ENCODE measurements at regions of chr7 and their contacts with region 1.

Region 1: DNA sequence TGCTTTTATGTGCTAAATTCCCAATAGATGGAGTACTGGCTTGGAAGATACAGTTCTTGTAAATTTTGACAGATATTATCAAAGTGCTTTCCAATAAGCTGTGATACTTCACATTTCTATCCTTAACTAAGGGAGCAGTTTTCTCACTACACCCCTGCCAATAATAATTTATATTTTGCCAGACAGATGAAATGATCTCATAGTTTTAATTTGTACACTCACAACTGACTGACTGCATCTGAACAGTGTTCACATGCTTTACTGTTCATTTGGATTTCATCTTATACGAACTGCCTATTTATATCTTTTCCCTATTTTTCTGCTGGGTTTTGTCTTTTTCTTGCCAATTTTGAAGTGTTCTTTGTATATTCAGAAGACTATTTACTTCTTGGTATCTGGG is 96.0 kb downstream of the BRAF start:
- DNase-seq: no peak
- ATAC-seq: no peak

Region 2: GRCh38 chr7:140902303-140902953 is 73.7 kb after region 1 on chr7:
- intact Hi-C with region 1: no loop called
- DNase-seq: no peak
- ATAC-seq: no peak

Region 3: GRCh38 chr7:140914083-140914482 is 85.3 kb after region 1 on chr7:
- intact Hi-C with region 1: loop called in 1 of 2 experiments (anchors 10 kb)
- DNase-seq: no peak
- ATAC-seq: no peak

Region 4: DNA sequence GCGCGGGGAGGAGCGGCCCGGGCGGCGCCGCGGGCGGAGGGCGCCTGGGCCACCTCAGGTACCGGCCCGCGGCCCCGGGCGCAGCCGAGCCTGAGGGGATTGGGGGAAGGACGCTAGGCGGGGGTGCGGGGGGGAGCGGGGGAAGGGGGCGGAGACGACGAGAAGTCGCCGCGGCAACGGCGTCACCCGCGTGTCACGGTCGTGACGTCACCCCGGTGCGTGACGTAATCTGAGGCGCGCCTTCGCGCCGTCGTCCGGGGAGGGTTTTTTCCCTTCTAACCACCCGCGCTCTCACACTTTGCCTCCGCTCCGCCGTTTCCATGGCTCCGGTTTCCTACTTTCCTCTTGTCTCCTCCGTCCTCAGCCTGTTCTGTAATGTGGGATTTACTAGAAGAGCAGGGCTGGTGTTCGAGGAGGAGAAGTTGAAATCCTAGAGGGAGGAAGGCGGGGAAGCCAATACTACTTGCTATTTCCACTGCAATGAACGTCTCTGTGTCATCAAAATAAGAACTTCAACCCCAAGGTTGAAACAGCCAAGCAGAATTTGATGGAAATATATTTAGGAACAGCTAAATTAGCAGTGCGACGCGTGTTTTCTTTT is 96.2 kb after region 1 on chr7 and contains the start of gene BRAF:
- intact Hi-C with region 1: no loop called
- DNase-seq: peak; percentile 91
- ATAC-seq: peak; percentile 83 to 88
- total RNA-seq, gene BRAF: 20.0 to 23.4 TPM

Measured in left cardiac atrium (tissue), 4 donors.